ENCODE measurements at regions of chr9 and their contacts with region 1.

Region 1: GRCh38 chr9:134434894-134435506 is 108.7 kb downstream of the RXRA start:
- DNase-seq: peak; percentile 97
- H3K4me3 Mint-ChIP-seq: peak overlapping the region; percentile 33
- H3K27ac Mint-ChIP-seq: peak overlapping the region; percentile 65
- H3K4me1 Mint-ChIP-seq: peaks cover 30% of the 10 kb centered on the region
- H3K27me3 Mint-ChIP-seq: no peaks in the 10 kb centered on the region
- CTCF ChIP-seq: no peak

Region 2: GRCh38 chr9:134040781-134041648 is 394.0 kb before region 1 on chr9:
- CTCF ChIA-PET with region 1: no interaction called
- POLR2A ChIA-PET with region 1: no interaction called
- intact Hi-C with region 1: no loop called
- DNase-seq: no peak
- H3K4me3 Mint-ChIP-seq: no peak overlapping the region
- H3K27ac Mint-ChIP-seq: no peak overlapping the region
- H3K4me1 Mint-ChIP-seq: no peaks in the 10 kb centered on the region
- H3K27me3 Mint-ChIP-seq: no peaks in the 10 kb centered on the region
- CTCF ChIP-seq: no peak

Region 3: DNA sequence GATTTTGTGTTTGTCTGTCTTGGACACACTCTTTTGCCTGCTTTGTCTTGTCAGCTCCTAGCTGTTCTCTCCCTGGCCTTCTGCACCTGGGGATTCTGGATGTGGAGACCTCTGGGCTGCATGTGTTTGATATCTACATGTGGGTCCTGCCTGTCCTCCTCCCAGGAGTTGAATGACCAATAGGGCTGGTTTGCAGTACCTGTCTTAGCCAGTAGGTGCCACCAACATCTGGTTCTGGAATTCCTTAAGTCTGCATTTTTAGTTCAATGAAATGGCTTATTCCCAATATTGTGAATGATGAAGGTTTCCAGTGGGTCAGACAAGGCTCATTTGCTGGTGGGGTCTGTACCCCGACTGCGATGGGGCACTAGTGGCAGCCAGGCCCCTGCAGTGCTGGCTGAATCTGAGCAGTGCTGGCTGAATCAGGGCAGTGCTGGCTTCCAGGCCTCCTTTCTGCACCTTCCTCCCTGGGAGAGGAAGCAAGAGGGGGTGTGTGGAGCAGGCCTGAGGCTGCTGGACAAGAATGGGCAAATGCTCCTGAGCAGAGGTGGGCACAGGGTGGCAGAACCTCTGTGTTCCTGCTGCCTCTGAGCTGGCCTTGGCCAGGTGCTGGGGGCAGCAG is 35.5 kb before region 1 on chr9:
- CTCF ChIA-PET with region 1: interaction called, 5 read pairs
- POLR2A ChIA-PET with region 1: interaction called, 5 read pairs
- intact Hi-C with region 1: loop called (anchors 2 kb)
- DNase-seq: peak; percentile 59
- H3K4me3 Mint-ChIP-seq: no peak overlapping the region
- H3K27ac Mint-ChIP-seq: no peak overlapping the region
- H3K4me1 Mint-ChIP-seq: peaks cover 2% of the 10 kb centered on the region
- H3K27me3 Mint-ChIP-seq: no peaks in the 10 kb centered on the region
- CTCF ChIP-seq: peak; percentile 68

Measured in MCF 10A (cell line).